BJ (cell line): ENCODE measurements at regions of chr13 and their contacts with region 1.

Region 1: GRCh38 chr13:110319774-110320509 is 12.9 kb downstream of the COL4A2 start:
- DNase-seq: peak; percentile 45
- H3K4me3 ChIP-seq: no peak overlapping the region
- H3K27me3 ChIP-seq: no peaks in the 10 kb centered on the region
- CTCF ChIP-seq: no peak

Region 2: GRCh38 chr13:110338441-110339101 is 18.6 kb after region 1 on chr13:
- CTCF ChIA-PET with region 1: no interaction called
- POLR2A ChIA-PET with region 1: interaction called, 19 read pairs
- DNase-seq: peak; percentile 66
- H3K4me3 ChIP-seq: no peak overlapping the region
- H3K27me3 ChIP-seq: no peaks in the 10 kb centered on the region
- CTCF ChIP-seq: no peak